CD4-positive, alpha-beta memory T cell (primary cell): ENCODE measurements at regions of chr6 and their contacts with region 1.

Region 1: DNA sequence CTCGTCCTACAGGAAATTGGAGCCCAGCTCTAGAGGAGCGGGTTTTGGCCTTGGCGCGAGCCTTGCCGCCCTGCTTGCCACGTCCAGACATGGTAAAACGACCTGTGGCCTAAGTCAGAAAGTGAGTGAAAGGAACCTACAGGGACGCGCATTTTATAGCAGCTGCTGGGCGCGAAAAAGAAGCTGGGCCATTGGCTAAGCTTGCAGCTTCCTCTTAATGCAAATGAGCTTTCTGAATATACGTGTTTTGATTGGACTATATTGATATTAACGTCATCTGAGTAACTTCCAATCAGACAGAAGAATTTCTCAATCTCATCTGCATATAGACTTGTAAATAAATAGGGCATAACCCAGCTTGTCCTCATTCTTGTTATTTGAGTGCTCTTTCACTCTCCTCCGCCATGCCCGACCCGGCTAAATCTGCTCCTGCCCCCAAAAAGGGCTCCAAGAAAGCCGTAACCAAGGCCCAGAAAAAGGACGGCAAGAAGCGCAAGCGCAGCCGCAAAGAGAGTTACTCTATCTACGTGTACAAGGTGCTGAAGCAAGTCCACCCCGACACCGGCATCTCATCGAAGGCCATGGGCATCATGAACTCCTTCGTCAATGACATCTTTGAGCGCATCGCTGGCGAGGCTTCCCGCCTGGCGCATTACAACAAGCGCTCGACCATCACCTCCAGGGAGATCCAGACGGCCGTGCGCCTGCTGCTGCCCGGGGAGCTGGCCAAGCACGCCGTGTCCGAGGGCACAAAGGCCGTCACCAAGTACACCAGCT is 18.9 kb downstream of the OR2B2 start:
- DNase-seq: peak; percentile 91 to 94 (median 93)
- H3K4me3 ChIP-seq: peak overlapping the region; percentile 72 to 86
- H3K4me3 Mint-ChIP-seq: no peak overlapping the region
- H3K27ac ChIP-seq: peak overlapping the region; percentile 80
- H3K27ac Mint-ChIP-seq: no peak overlapping the region
- H3K4me1 ChIP-seq: peaks cover 30% of the 10 kb centered on the region
- H3K4me1 Mint-ChIP-seq: peaks cover 15 to 40% (median 28%) of the 10 kb centered on the region in 4 donors
- H3K27me3 ChIP-seq: no peaks in the 10 kb centered on the region
- H3K27me3 Mint-ChIP-seq: no peaks in the 10 kb centered on the region

Region 2: DNA sequence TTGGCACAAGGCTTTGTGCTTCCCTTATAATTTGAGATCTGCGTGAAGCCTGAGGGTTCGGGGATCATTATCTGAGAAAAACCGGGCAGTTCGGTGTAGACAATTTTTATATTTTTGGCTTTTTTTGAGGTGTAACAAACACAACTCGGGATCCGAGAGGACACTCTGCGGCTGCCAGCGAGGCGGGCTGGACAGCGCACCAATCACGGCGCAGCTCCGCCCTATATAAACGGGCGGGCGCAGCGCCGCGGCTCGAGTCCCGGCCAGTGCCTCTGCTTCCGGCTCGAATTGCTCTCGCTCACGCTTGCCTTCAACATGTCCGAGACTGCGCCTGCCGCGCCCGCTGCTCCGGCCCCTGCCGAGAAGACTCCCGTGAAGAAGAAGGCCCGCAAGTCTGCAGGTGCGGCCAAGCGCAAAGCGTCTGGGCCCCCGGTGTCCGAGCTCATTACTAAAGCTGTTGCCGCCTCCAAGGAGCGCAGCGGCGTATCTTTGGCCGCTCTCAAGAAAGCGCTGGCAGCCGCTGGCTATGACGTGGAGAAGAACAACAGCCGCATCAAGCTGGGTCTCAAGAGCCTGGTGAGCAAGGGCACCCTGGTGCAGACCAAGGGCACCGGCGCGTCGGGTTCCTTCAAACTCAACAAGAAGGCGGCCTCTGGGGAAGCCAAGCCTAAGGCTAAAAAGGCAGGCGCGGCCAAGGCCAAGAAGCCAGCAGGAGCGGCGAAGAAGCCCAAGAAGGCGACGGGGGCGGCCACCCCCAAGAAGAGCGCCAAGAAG is 1737.0 kb before region 1 on chr6:
- CTCF ChIA-PET with region 1: no interaction called
- POLR2A ChIA-PET with region 1: interaction called, 46 read pairs
- intact Hi-C with region 1: loop called (anchors 1 kb)
- DNase-seq: peak; percentile 80 to 89 (median 88)
- H3K4me3 ChIP-seq: peak overlapping the region; percentile 53 to 64
- H3K4me3 Mint-ChIP-seq: peak overlapping the region; percentile 88 to 99 (median 96)
- H3K27ac ChIP-seq: peak overlapping the region; percentile 79
- H3K27ac Mint-ChIP-seq: peak overlapping the region; percentile 91 to 98 (median 95)
- H3K4me1 ChIP-seq: peaks cover 26% of the 10 kb centered on the region
- H3K4me1 Mint-ChIP-seq: peaks cover 16 to 58% (median 26%) of the 10 kb centered on the region in 4 donors
- H3K27me3 ChIP-seq: no peaks in the 10 kb centered on the region
- H3K27me3 Mint-ChIP-seq: no peaks in the 10 kb centered on the region

Region 3: DNA sequence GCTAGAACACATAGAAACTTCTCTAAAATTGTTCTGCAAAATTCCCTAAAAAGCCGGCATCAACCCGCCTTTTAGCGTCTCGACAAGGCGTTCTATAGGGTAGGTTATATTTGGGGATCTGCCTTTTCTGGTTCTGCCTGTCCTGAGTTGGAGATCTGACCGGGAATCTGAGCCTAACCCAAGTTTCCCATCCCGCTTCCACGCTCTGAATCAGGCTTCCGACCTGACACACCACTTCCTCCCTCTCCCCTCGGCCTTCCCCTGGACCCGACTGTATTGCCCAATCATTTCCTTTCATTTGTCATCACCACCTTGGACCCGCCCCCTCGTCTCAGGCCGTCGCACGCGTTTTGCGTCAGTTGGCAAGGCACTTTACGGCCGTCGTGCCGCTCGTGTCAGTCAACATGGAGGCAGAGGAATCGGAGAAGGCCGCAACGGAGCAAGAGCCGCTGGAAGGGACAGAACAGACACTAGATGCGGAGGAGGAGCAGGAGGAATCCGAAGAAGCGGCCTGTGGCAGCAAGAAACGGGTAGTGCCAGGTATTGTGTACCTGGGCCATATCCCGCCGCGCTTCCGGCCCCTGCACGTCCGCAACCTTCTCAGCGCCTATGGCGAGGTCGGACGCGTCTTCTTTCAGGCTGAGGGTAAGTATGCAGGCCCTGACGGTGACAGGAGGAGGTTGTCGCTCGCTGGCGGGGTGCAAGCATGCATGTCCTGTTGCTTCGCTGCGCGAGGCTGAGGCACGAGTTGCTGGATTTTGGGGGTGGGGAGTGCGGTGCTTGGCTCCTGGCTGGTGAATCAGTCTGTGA is 1296.5 kb before region 1 on chr6 and contains the start of gene ABT1:
- CTCF ChIA-PET with region 1: no interaction called
- POLR2A ChIA-PET with region 1: no interaction called
- intact Hi-C with region 1: loop called (anchors 10 kb)
- DNase-seq: peak; percentile 95 to 98 (median 96)
- H3K4me3 ChIP-seq: peak within 1 kb of the TSS; percentile 76 to 98
- H3K4me3 Mint-ChIP-seq: no peak within 1 kb of the TSS
- H3K27ac ChIP-seq: peak within 1 kb of the TSS; percentile 91
- H3K27ac Mint-ChIP-seq: peak within 1 kb of the TSS in 3 of 7 donors; percentile 80 to 92 (median 88)
- H3K4me1 ChIP-seq: peaks cover 24% of the 10 kb centered on the region
- H3K4me1 Mint-ChIP-seq: peaks cover 0 to 16% (median 8%) of the 10 kb centered on the region in 4 donors
- H3K27me3 ChIP-seq: no peaks in the 10 kb centered on the region
- H3K27me3 Mint-ChIP-seq: peaks cover 15 to 22% of the 10 kb centered on the region in 2 donors
- total RNA-seq, gene ABT1: 33.5 to 34.8 TPM

Region 4: GRCh38 chr6:27188885-27189418 is 704.3 kb before region 1 on chr6:
- CTCF ChIA-PET with region 1: interaction called, 10 read pairs
- POLR2A ChIA-PET with region 1: interaction called, 7 read pairs
- intact Hi-C with region 1: loop called (anchors 1 kb)
- DNase-seq: peak; percentile 55 to 69 (median 67)
- H3K4me3 ChIP-seq: peak overlapping the region; percentile 58 to 73
- H3K4me3 Mint-ChIP-seq: peak overlapping the region; percentile 79 to 96 (median 93)
- H3K27ac ChIP-seq: peak overlapping the region; percentile 44
- H3K27ac Mint-ChIP-seq: peak overlapping the region; percentile 49 to 86 (median 73)
- H3K4me1 ChIP-seq: peaks cover 9% of the 10 kb centered on the region
- H3K4me1 Mint-ChIP-seq: peaks cover 2 to 20% (median 15%) of the 10 kb centered on the region in 4 donors
- H3K27me3 ChIP-seq: no peaks in the 10 kb centered on the region
- H3K27me3 Mint-ChIP-seq: no peaks in the 10 kb centered on the region

Region 5: DNA sequence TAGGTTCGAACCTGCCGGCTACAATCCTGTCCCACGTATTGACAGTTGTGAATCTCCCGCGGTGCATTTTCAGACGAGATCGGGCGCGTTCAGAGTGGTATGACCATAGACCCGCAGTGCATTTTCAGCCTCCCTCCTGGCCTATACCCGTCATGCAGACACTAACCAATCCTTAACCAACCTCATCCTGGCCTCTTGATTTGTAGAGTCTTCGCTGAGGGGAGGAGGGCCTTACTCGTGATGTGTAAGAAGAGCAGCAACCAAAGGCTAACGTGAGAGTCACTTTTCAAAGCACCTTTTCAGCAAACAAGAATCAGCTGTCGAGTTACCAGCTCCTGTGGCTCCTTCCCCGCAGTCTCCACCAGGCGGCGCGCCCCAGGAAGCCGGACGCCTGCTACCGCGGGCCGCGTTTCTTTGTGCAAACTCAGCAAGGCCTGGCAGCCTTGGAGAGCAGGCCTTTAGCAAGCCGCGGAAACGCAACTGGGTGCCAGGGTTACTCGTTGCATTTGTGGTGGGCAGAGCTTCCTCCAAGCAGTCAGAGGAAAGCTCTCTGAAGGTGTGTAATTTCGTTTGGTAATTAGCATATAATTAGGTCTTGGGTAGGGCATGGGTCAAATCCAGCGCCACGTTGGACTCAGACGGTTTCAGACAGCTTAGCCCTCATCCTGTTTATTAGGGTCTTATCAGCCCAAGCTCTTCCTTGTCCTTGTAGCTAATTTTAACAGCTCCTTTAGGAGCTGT is 120.8 kb before region 1 on chr6:
- CTCF ChIA-PET with region 1: interaction called, 219 read pairs
- POLR2A ChIA-PET with region 1: interaction called, 59 read pairs
- intact Hi-C with region 1: loop called (anchors 1 kb)
- DNase-seq: peak; percentile 82 to 85 (median 84)
- H3K4me3 ChIP-seq: no peak overlapping the region
- H3K4me3 Mint-ChIP-seq: peak overlapping the region in 5 of 8 donors; percentile 0 to 60 (median 51)
- H3K27ac ChIP-seq: no peak overlapping the region
- H3K27ac Mint-ChIP-seq: peak overlapping the region in 5 of 7 donors; percentile 4 to 80 (median 15)
- H3K4me1 ChIP-seq: peaks cover 11% of the 10 kb centered on the region
- H3K4me1 Mint-ChIP-seq: peaks cover 3 to 17% (median 9%) of the 10 kb centered on the region in 4 donors
- H3K27me3 ChIP-seq: peaks cover 5% of the 10 kb centered on the region
- H3K27me3 Mint-ChIP-seq: peaks cover 7 to 26% of the 10 kb centered on the region in 2 donors

Region 6: DNA sequence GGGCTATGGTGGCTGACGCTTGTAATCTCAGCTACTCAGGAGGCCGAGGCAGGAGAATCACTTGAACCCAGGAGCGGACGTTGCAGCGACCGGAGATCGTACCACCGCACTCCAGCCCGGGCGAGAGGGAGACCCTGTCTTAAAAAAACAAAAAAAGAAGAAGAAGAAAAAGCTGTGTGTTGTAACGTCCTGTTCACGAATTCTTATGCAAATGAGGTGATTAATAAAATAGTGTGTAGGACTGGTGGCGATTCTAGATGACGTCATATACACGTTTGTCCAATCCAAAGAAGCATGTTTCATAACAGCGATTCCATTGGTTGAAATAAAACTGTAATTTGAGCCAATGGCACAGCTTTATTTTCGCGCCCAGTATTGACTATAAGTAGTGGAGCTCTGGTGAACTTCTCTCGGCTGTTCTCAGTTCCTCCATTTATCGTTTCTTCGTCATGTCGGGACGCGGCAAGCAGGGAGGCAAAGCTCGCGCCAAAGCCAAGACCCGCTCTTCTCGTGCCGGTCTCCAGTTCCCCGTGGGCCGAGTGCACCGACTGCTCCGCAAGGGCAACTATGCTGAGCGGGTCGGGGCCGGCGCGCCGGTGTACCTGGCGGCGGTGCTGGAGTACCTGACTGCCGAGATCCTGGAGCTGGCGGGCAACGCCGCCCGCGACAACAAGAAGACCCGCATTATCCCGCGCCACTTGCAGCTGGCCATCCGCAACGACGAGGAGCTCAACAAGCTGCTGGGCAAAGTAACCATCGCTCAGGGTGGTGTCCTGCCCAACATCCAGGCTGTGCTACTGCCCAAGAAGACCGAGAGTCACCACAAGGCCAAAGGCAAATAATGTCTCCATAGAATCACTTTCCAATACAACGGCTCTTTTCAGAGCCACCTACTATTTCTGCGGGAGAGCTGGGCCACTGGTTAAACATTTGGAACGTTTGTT is 28.1 kb before region 1 on chr6:
- CTCF ChIA-PET with region 1: interaction called, 226 read pairs
- POLR2A ChIA-PET with region 1: interaction called, 827 read pairs
- intact Hi-C with region 1: loop called (anchors 1 kb)
- DNase-seq: peak; percentile 86 to 93 (median 91)
- H3K4me3 ChIP-seq: peak overlapping the region; percentile 33 to 69
- H3K4me3 Mint-ChIP-seq: peak overlapping the region; percentile 96 to 99 (median 99)
- H3K27ac ChIP-seq: peak overlapping the region; percentile 62
- H3K27ac Mint-ChIP-seq: peak overlapping the region; percentile 94 to 99 (median 98)
- H3K4me1 ChIP-seq: peaks cover 31% of the 10 kb centered on the region
- H3K4me1 Mint-ChIP-seq: peaks cover 18 to 46% (median 34%) of the 10 kb centered on the region in 4 donors
- H3K27me3 ChIP-seq: no peaks in the 10 kb centered on the region
- H3K27me3 Mint-ChIP-seq: no peaks in the 10 kb centered on the region

Region 7: DNA sequence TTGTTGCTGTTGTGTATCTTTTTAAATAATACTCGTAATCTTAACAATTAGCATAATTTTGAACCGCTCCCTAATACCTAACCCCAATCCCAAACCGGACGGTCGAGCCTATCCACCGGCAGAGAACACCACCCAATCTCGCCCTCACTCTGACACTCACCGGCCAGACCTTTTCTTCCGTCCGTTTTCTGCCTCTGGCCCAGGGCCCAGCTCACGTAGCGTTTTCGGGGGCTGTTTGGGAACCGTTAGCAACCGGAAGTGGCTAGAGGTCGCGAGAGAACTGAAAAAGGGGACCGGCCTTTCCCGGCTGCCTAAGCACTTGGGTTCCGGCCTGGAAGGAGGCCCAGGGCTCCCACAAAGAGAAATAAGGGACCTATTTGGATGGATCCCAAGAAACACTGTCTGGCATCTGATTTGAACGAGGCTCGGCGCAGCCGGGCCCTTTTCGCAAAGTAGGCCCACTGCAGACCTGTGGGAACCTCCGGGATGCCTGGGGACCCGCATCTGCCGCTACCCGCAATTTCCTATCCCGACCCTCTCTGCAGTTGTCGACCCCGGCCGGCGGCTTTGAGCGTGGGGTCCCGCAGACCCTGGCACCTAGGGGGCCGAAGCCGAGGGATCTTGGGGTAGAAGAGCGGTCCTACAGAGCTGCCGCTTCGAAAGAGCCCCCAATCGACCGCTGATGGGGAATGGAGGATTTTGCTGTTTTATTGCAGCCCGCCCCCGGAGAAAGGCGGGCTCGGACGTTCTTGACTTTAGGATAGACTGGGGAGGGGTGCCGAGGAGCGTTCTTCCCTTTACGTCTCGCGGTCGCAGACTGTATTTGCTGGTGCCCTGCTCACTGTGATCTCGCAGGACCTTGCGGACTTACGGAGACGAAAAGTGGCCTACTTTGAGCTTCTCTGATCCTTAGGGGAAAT is 243.6 kb after region 1 on chr6:
- CTCF ChIA-PET with region 1: no interaction called
- POLR2A ChIA-PET with region 1: no interaction called
- intact Hi-C with region 1: no loop called
- DNase-seq: peak; percentile 54 to 76 (median 62)
- H3K4me3 ChIP-seq: peak overlapping the region; percentile 64 to 96
- H3K4me3 Mint-ChIP-seq: peak overlapping the region; percentile 92 to 99 (median 94)
- H3K27ac ChIP-seq: peak overlapping the region; percentile 98
- H3K27ac Mint-ChIP-seq: peak overlapping the region; percentile 95 to 100 (median 98)
- H3K4me1 ChIP-seq: peaks cover 51% of the 10 kb centered on the region
- H3K4me1 Mint-ChIP-seq: peaks cover 52 to 88% (median 68%) of the 10 kb centered on the region in 4 donors
- H3K27me3 ChIP-seq: no peaks in the 10 kb centered on the region
- H3K27me3 Mint-ChIP-seq: no peaks in the 10 kb centered on the region

Region 8: GRCh38 chr6:29845405-29846006 is 1952.3 kb after region 1 on chr6:
- CTCF ChIA-PET with region 1: no interaction called
- POLR2A ChIA-PET with region 1: no interaction called
- intact Hi-C with region 1: no loop called
- DNase-seq: peak in 1 of 5 donors; percentile 80
- H3K4me3 ChIP-seq: no peak overlapping the region
- H3K4me3 Mint-ChIP-seq: no peak overlapping the region
- H3K27ac ChIP-seq: no peak overlapping the region
- H3K27ac Mint-ChIP-seq: peak overlapping the region in 2 of 7 donors; percentile 39 to 40
- H3K4me1 ChIP-seq: no peaks in the 10 kb centered on the region
- H3K4me1 Mint-ChIP-seq: peaks cover 8 to 16% (median 11%) of the 10 kb centered on the region in 4 donors
- H3K27me3 ChIP-seq: peaks cover 22% of the 10 kb centered on the region
- H3K27me3 Mint-ChIP-seq: peaks cover 23 to 34% of the 10 kb centered on the region in 2 donors